ENCODE measurements at regions of chr18 and their contacts with region 1.

Region 1: DNA sequence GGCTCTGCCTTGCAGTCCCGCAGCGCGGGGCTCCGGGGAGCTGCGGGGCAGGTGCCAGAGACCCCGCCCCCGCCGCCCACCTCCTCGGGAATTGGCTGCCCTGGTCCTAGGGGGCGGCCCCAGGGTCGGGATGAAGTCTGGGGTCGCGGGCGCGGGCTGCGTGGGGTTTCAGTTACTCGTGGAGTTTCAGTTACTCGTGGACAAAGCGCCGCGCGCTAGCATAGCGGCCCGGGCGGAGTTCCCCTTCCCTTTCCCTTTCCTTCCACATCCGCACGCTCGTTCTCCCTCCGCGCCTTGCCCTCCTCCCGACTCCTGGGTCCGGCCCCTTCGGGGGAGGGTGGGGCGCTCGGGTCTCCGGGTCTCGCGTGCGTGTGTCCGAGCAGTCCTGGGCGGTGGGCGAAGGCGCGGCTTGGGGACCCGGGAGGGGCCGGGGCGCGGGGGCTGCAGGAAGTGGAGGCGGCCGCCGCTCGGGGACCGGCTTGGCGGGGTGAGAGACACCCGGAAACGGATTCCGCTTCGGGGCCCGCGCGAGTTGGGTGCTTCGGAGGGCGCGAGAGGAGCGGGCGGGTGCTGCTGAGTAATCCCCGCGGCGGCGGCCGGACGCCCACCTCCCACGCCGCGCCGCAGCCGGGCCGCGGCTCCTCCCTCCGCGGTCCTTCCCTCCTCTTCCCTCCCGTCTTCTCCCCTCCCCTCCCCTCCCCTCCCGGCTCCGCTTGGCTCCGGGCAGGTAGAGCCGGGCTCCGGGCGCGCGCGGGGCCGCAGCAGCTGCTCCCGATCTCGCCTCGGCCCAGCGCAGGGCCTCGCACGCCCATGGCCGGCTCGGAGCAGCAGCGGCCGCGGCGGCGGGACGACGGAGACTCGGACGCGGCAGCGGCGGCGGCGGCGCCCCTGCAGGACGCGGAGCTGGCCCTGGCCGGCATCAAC is at the start of gene TTC39C:
- DNase-seq: peak; percentile 76
- ATAC-seq: peak; percentile 66
- H3K4me3 Mint-ChIP-seq: peak within 1 kb of the TSS; percentile 89
- H3K27ac Mint-ChIP-seq: peak within 1 kb of the TSS; percentile 83
- H3K4me1 Mint-ChIP-seq: peaks cover 84% of the 10 kb centered on the region
- H3K27me3 Mint-ChIP-seq: no peaks in the 10 kb centered on the region
- CTCF ChIP-seq: no peak
- total RNA-seq, gene TTC39C: 60.6 and 68.4 TPM in 2 replicates

Region 2: DNA sequence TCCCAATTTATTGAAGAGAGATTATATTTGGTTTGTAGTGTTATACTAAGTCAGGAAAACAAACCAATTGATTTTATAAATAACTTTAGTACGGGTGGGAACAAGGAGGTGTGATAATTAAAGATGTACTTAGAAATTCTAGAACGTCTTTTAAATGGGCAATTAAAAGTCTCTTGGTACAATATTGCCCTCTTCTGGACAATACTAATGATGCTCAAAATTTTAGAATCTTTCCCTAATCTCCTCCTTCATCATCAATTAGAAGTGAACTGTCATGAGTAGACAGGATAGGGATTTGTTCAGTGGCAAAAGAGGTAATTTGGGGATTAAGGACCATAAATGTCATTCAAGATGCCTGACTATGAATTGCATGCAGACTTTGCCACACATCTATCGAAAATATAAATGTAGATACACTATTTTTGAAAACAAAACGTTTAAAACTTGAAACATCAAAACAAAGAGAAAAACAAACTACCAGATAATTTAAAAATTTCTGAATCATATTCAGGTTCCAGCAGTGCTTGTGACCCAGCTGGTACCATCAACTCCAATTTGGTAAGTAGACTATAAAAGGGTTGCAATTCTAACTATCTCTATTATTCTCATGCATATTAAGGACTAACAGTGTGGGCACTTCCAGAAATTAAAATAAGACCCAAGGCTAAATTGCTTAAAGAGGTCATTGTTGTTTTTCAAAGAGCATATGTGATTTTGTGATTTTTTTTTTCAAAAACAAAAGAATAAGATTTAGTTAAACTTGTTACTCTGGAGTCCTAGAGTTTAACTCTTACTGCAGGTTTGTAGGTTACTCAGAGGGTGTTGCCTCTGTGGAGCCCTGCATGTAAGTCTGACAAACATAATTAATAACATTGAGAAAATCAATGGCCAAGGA is 201.5 kb before region 1 on chr18:
- CTCF ChIA-PET with region 1: no interaction called
- POLR2A ChIA-PET with region 1: no interaction called
- intact Hi-C with region 1: loop called (anchors 5 kb)
- DNase-seq: no peak
- ATAC-seq: no peak
- H3K4me3 Mint-ChIP-seq: no peak overlapping the region
- H3K27ac Mint-ChIP-seq: no peak overlapping the region
- H3K4me1 Mint-ChIP-seq: peaks cover 11% of the 10 kb centered on the region
- H3K27me3 Mint-ChIP-seq: no peaks in the 10 kb centered on the region
- CTCF ChIP-seq: no peak

Region 3: GRCh38 chr18:23861805-23862470 is 152.4 kb before region 1 on chr18:
- CTCF ChIA-PET with region 1: no interaction called
- POLR2A ChIA-PET with region 1: interaction called, 3 read pairs
- intact Hi-C with region 1: loop called (anchors 5 kb)
- DNase-seq: no peak
- ATAC-seq: no peak
- H3K4me3 Mint-ChIP-seq: no peak overlapping the region
- H3K27ac Mint-ChIP-seq: peak overlapping the region; percentile 52
- H3K4me1 Mint-ChIP-seq: peaks cover 73% of the 10 kb centered on the region
- H3K27me3 Mint-ChIP-seq: no peaks in the 10 kb centered on the region
- CTCF ChIP-seq: no peak

Region 4: DNA sequence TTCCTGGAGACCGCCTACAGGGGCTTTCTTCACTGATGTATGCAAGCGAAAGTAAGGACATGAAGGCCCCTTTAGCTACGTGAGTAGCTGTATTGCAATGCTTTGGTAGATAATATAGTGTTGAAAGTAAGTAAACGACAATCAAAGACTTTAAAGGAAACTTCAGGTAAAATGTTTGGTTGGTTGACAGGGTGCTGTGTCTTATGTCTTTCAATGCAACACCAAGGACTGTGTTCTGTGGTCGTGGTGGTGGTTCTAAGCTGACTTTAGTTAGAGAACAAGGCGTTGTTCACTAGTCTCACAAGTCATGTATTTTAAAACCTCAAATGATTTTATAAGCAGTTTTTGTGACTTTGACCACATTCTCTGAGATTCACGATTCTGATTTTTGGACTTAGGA is 66.5 kb after region 1 on chr18:
- CTCF ChIA-PET with region 1: no interaction called
- POLR2A ChIA-PET with region 1: no interaction called
- intact Hi-C with region 1: no loop called
- DNase-seq: no peak
- ATAC-seq: no peak
- H3K4me3 Mint-ChIP-seq: no peak overlapping the region
- H3K27ac Mint-ChIP-seq: no peak overlapping the region
- H3K4me1 Mint-ChIP-seq: peaks cover 4% of the 10 kb centered on the region
- H3K27me3 Mint-ChIP-seq: no peaks in the 10 kb centered on the region
- CTCF ChIP-seq: no peak

Region 5: GRCh38 chr18:24090876-24091275 is 76.6 kb after region 1 on chr18:
- CTCF ChIA-PET with region 1: no interaction called
- POLR2A ChIA-PET with region 1: interaction called, 10 read pairs
- intact Hi-C with region 1: no loop called
- DNase-seq: no peak
- ATAC-seq: no peak
- H3K4me3 Mint-ChIP-seq: no peak overlapping the region
- H3K27ac Mint-ChIP-seq: no peak overlapping the region
- H3K4me1 Mint-ChIP-seq: peaks cover 19% of the 10 kb centered on the region
- H3K27me3 Mint-ChIP-seq: no peaks in the 10 kb centered on the region
- CTCF ChIP-seq: no peak

Measured in activated B cell treated with CpG ODN at 0.5 μM for 24 hours (primary cell).